CD4-positive, alpha-beta memory T cell (primary cell): ENCODE measurements at regions of chr3 and their contacts with region 1.

Region 1: GRCh38 chr3:39146984-39147591 is 6.3 kb downstream of the CSRNP1 start:
- DNase-seq: peak in 3 of 5 donors; percentile 48 to 85 (median 57)
- H3K4me3 ChIP-seq: peak overlapping the region; percentile 25 to 26
- H3K4me3 Mint-ChIP-seq: peak overlapping the region; percentile 79 to 99 (median 86)
- H3K27ac ChIP-seq: peak overlapping the region; percentile 69
- H3K27ac Mint-ChIP-seq: peak overlapping the region; percentile 97 to 100 (median 99)
- H3K4me1 ChIP-seq: peaks cover 63% of the 10 kb centered on the region
- H3K4me1 Mint-ChIP-seq: peaks cover 57 to 94% (median 68%) of the 10 kb centered on the region in 4 donors
- H3K27me3 ChIP-seq: no peaks in the 10 kb centered on the region
- H3K27me3 Mint-ChIP-seq: no peaks in the 10 kb centered on the region

Region 2: DNA sequence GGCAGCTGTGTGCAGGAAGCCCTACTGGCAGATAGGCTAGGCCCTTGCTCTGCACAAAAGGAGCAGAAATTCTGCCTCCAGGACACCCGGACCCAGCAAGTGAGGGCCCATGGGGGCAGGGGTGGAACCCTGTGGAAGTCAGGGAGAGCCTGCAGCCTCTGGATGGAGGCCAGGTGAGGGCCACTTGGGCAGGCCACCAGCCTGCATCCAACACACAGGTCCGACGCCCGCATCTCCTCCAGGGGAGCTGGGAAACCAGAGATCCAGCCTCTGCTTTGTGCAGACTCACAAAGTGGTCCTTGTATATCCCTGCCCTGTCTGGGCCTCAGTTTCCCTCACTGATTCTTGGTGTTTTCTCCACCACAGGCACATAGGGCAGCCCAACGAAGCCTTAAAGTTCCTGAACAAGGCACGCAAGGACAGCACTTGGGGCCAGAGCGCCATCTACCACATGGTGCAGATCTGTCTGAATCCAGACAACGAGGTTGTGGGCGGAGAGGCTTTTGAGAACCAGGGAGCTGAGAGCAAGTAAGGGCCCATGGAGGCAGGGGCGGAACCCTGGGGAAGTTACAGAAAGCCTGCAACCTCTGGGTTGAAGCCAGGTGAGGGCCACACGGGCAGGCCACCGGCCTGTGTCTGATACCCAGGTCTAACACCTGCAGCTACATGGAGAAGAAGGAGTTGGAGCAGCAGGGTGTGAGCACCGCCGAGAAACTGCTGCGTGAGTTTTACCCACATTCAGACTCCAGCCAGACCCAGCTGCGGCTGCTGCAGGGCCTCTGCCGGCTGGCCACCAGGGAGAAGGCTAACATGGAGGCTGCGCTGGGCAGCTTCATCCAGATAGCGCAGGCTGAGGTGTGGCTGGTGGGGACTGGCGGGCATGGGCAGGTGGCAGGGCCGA is 10.3 kb before region 1 on chr3:
- CTCF ChIA-PET with region 1: interaction called, 3 read pairs
- POLR2A ChIA-PET with region 1: interaction called, 10 read pairs
- intact Hi-C with region 1: no loop called
- DNase-seq: no peak
- H3K4me3 ChIP-seq: no peak overlapping the region
- H3K4me3 Mint-ChIP-seq: no peak overlapping the region
- H3K27ac ChIP-seq: no peak overlapping the region
- H3K27ac Mint-ChIP-seq: peak overlapping the region in 2 of 7 donors; percentile 25 to 97
- H3K4me1 ChIP-seq: peaks cover 3% of the 10 kb centered on the region
- H3K4me1 Mint-ChIP-seq: peaks cover 0 to 30% (median 5%) of the 10 kb centered on the region in 4 donors
- H3K27me3 ChIP-seq: no peaks in the 10 kb centered on the region
- H3K27me3 Mint-ChIP-seq: no peaks in the 10 kb centered on the region

Region 3: DNA sequence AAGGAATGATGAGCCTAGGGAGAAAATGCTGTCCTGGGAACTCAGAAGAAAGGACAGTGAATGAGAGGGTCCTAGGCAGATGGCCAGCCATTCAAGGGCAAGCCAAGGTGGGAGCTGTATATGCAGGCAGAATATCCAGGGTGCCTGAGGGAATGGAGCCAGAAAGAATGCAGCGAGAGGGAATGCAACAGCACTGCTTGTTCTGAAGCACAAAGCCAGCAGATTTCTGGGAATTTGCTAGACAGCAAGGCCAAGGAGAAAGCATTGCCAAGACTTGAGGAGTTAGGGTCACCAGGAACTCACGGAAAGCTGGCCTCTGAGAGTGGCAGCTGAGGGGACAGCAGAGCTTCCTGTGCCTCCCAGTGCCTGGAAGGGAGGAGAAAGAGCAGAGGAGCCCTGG is 862.9 kb after region 1 on chr3:
- CTCF ChIA-PET with region 1: no interaction called
- POLR2A ChIA-PET with region 1: no interaction called
- intact Hi-C with region 1: no loop called
- DNase-seq: no peak
- H3K4me3 ChIP-seq: no peak overlapping the region
- H3K4me3 Mint-ChIP-seq: no peak overlapping the region
- H3K27ac ChIP-seq: no peak overlapping the region
- H3K27ac Mint-ChIP-seq: no peak overlapping the region
- H3K4me1 ChIP-seq: no peaks in the 10 kb centered on the region
- H3K4me1 Mint-ChIP-seq: no peaks in the 10 kb centered on the region
- H3K27me3 ChIP-seq: no peaks in the 10 kb centered on the region
- H3K27me3 Mint-ChIP-seq: peaks cover 3 to 4% of the 10 kb centered on the region in 2 donors